H1 (cell line): ENCODE measurements at regions of chr19 and their contacts with region 1.

Region 1: GRCh38 chr19:42440357-42441048 is 2.2 kb downstream of the CXCL17 start:
- DNase-seq: peak in 1 of 2 experiments; percentile 93
- H3K4me3 ChIP-seq: no peak overlapping the region
- H3K27ac ChIP-seq: no peak overlapping the region
- H3K4me1 ChIP-seq: peaks cover 0 to 7% (median 0%) of the 10 kb centered on the region in 4 experiments; a peak in 2 of 7 replicates
- H3K27me3 ChIP-seq: no peaks in the 10 kb centered on the region; a peak in 2 of 7 replicates
- CTCF ChIP-seq: peak; percentile 88 to 89 (median 89)
- EP300 ChIP-seq: no peak
- POLR2A ChIP-seq: no peak
- RAD21 ChIP-seq: peak in 1 of 2 experiments; percentile 47; a peak in 3 of 4 replicates

Region 2: GRCh38 chr19:42455621-42456081 is 15.1 kb after region 1 on chr19:
- CTCF ChIA-PET with region 1: interaction called, 55 read pairs
- POLR2A ChIA-PET with region 1: interaction called, 3 read pairs
- DNase-seq: no peak
- H3K4me3 ChIP-seq: no peak overlapping the region
- H3K27ac ChIP-seq: no peak overlapping the region
- H3K4me1 ChIP-seq: peaks cover 0 to 9% (median 5%) of the 10 kb centered on the region in 4 experiments; a peak in 5 of 7 replicates
- H3K27me3 ChIP-seq: no peaks in the 10 kb centered on the region
- CTCF ChIP-seq: no peak
- EP300 ChIP-seq: no peak
- POLR2A ChIP-seq: no peak
- RAD21 ChIP-seq: no peak

Region 3: DNA sequence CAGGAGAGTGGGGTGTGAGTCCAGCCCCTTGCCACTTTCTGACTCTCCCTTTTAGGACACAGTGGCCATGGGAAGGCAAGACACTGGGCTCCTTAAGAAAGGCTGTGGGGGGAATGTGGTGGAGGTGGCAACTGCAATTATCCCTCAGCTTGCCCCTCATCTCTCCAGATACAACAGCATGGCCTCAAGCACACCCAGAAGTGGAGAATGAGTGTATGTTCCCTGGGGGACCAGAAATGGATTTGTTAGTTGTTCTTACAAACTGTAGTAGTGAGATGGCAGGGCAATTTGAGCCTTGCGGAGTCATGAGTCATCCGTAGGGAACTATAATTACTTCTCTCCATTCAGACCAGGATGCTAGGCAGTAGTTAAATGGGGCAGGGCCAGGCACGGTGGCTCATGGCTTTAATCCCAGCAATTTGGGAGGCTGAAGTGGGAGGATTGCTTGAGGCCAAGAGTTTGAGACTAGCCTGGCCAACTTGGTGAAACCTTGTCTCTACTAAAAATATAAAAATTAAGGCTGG is 27.8 kb after region 1 on chr19:
- CTCF ChIA-PET with region 1: interaction called, 17 read pairs
- POLR2A ChIA-PET with region 1: interaction called, 4 read pairs
- DNase-seq: no peak
- H3K4me3 ChIP-seq: no peak overlapping the region
- H3K27ac ChIP-seq: no peak overlapping the region
- H3K4me1 ChIP-seq: peaks cover 11 to 20% (median 15%) of the 10 kb centered on the region in 4 experiments
- H3K27me3 ChIP-seq: no peaks in the 10 kb centered on the region
- CTCF ChIP-seq: no peak
- EP300 ChIP-seq: no peak
- POLR2A ChIP-seq: no peak
- RAD21 ChIP-seq: no peak

Region 4: GRCh38 chr19:42497492-42498168 is 57.1 kb after region 1 on chr19:
- CTCF ChIA-PET with region 1: interaction called, 12 read pairs
- POLR2A ChIA-PET with region 1: no interaction called
- DNase-seq: no peak
- H3K4me3 ChIP-seq: no peak overlapping the region
- H3K27ac ChIP-seq: no peak overlapping the region
- H3K4me1 ChIP-seq: peaks cover 2 to 7% (median 4%) of the 10 kb centered on the region in 4 experiments
- H3K27me3 ChIP-seq: no peaks in the 10 kb centered on the region; a peak in 2 of 7 replicates
- CTCF ChIP-seq: no peak
- EP300 ChIP-seq: no peak
- POLR2A ChIP-seq: no peak
- RAD21 ChIP-seq: no peak

Region 5: GRCh38 chr19:42553292-42554045 is 113.0 kb after region 1 on chr19:
- CTCF ChIA-PET with region 1: interaction called, 16 read pairs
- POLR2A ChIA-PET with region 1: interaction called, 3 read pairs
- DNase-seq: no peak
- H3K4me3 ChIP-seq: no peak overlapping the region
- H3K27ac ChIP-seq: no peak overlapping the region
- H3K4me1 ChIP-seq: peaks cover 1 to 12% (median 8%) of the 10 kb centered on the region in 4 experiments
- H3K27me3 ChIP-seq: no peaks in the 10 kb centered on the region; a peak in 2 of 7 replicates
- CTCF ChIP-seq: no peak
- EP300 ChIP-seq: no peak
- POLR2A ChIP-seq: no peak
- RAD21 ChIP-seq: no peak

Region 6: DNA sequence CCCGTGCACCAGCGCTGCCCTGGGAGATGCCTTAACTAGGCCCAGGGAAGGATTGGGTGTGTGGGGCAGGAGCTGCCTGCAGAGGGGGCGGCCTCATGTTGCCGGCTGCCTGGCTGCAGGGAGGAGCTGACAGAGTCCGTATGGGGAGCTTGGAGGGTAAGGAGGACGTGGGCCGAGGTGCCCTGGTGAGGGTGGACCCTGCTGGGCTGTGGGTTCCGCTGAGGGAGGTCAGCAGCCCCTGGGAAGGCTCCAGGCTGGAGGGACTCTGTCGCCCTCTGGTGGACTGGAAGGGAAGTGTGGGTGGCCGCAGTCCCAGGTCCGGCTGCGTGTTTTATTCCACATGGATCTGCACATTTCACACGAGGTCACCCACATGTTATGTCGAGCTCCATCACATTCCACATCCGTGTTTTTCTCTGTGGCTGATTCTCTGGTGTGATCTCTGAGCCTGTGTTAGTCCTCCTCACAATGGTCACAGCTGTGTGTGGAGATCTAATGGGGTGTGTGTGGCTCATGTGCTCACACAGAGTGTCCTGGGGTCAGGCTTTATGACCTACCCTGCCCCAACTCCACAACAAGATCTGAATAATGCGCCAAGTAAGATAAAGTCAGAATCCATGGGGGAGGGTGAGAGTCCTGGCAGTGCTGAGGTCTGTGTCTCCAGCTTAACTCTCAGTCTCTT is 156.0 kb after region 1 on chr19:
- CTCF ChIA-PET with region 1: interaction called, 11 read pairs
- POLR2A ChIA-PET with region 1: no interaction called
- DNase-seq: peak in 1 of 2 experiments; percentile 82
- H3K4me3 ChIP-seq: no peak overlapping the region
- H3K27ac ChIP-seq: no peak overlapping the region
- H3K4me1 ChIP-seq: no peaks in the 10 kb centered on the region
- H3K27me3 ChIP-seq: 0 out of 7 replicates have a peak, but pooled peaks cover 0 to 2% (median 0%) of the 10 kb centered on the region in 4 experiments
- CTCF ChIP-seq: peak; percentile 81 to 98 (median 98)
- EP300 ChIP-seq: no peak
- POLR2A ChIP-seq: no peak
- RAD21 ChIP-seq: peak; percentile 71 to 78